Heart left ventricle (tissue), 16 donors: ENCODE measurements at regions of chr2 and their contacts with region 1.

Region 1: GRCh38 chr2:26235085-26235484 is 9.3 kb downstream of the HADHA start:
- DNase-seq: no peak
- ATAC-seq: no peak
- H3K4me3 ChIP-seq: no peak overlapping the region
- H3K27ac ChIP-seq: no peak overlapping the region
- H3K4me1 ChIP-seq: peaks cover 0 to 27% (median 18%) of the 10 kb centered on the region in 12 donors
- H3K27me3 ChIP-seq: no peaks in the 10 kb centered on the region
- CTCF ChIP-seq: peak in 8 of 12 donors; percentile 10 to 46 (median 25)
- POLR2A ChIP-seq: no peak

Region 2: GRCh38 chr2:26196683-26197418 is 38.2 kb before region 1 on chr2:
- intact Hi-C with region 1: loop called in 1 of 10 experiments (anchors 5 kb)
- DNase-seq: no peak
- ATAC-seq: peak in 3 of 4 donors; percentile 10 to 38 (median 26)
- H3K4me3 ChIP-seq: no peak overlapping the region
- H3K27ac ChIP-seq: no peak overlapping the region
- H3K4me1 ChIP-seq: peaks cover 0 to 9% (median 0%) of the 10 kb centered on the region in 12 donors
- H3K27me3 ChIP-seq: no peaks in the 10 kb centered on the region
- CTCF ChIP-seq: no peak
- POLR2A ChIP-seq: no peak

Region 3: DNA sequence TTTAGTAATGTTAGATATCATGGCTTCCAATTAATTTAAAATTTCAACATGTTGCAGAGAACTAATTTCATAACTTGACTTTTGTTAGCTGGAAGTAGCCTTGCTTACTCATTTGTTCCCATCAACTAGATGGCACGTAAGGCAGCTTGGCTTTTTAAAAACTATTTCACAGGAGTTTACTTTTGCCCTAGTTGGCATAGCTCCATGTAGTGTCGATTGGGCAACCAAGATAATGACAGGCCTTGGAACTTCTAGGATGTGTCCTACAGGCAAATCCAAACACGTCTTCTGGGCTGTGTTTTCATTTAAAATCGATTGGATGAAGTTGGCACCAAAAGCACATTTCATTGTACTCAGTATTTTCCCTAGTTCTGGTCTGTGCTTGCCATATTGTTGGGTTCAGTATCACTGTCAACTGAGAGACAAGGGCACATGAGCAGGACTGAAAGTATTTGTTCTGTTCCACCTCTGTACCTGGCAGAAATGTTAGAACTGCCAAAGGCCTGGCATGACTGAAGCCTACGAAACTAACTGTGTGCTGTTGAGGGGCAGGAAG is 39.1 kb after region 1 on chr2:
- intact Hi-C with region 1: loop called in 4 of 10 experiments (anchors 2 to 5 kb)
- DNase-seq: peak in 4 of 5 donors; percentile 29 to 57 (median 38)
- ATAC-seq: peak; percentile 91 to 94 (median 92)
- H3K4me3 ChIP-seq: no peak overlapping the region
- H3K27ac ChIP-seq: peak overlapping the region; percentile 55 to 90 (median 77)
- H3K4me1 ChIP-seq: peaks cover 0 to 59% (median 26%) of the 10 kb centered on the region in 12 donors
- H3K27me3 ChIP-seq: no peaks in the 10 kb centered on the region
- CTCF ChIP-seq: no peak
- POLR2A ChIP-seq: no peak

Region 4: DNA sequence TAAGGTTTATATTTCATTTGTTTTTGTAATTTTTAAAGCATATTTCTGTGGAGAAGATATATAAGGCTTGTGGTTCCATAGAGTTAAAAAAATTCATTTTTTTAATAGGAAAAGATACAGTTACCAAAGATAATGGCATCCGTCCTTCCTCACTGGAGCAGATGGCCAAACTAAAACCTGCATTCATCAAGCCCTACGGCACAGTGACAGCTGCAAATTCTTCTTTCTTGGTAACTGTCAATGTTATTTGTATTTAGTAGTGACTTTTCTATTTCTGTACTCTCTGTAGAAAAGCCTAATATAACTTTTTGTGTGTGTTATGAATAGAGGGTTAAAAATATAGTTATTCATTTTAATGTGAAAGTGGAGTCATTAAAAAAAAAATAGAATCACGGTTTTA is 44.8 kb after region 1 on chr2:
- intact Hi-C with region 1: loop called in 3 of 10 experiments (anchors 2 to 5 kb)
- DNase-seq: no peak
- ATAC-seq: no peak
- H3K4me3 ChIP-seq: no peak overlapping the region
- H3K27ac ChIP-seq: peak overlapping the region in 1 of 12 donors; percentile 9
- H3K4me1 ChIP-seq: peaks cover 0 to 16% (median 7%) of the 10 kb centered on the region in 12 donors
- H3K27me3 ChIP-seq: no peaks in the 10 kb centered on the region
- CTCF ChIP-seq: no peak
- POLR2A ChIP-seq: no peak

Region 5: GRCh38 chr2:26330113-26330549 is 95.0 kb after region 1 on chr2:
- intact Hi-C with region 1: loop called in 7 of 10 experiments (anchors 5 to 10 kb)
- DNase-seq: peak; percentile 76 to 91 (median 85)
- ATAC-seq: peak; percentile 73 to 93 (median 91)
- H3K4me3 ChIP-seq: no peak overlapping the region
- H3K27ac ChIP-seq: no peak overlapping the region
- H3K4me1 ChIP-seq: peaks cover 0 to 10% (median 0%) of the 10 kb centered on the region in 12 donors
- H3K27me3 ChIP-seq: no peaks in the 10 kb centered on the region
- CTCF ChIP-seq: peak; percentile 77 to 92 (median 86)
- POLR2A ChIP-seq: no peak